ENCODE measurements at regions of chr6 and their contacts with region 1.

Region 1: DNA sequence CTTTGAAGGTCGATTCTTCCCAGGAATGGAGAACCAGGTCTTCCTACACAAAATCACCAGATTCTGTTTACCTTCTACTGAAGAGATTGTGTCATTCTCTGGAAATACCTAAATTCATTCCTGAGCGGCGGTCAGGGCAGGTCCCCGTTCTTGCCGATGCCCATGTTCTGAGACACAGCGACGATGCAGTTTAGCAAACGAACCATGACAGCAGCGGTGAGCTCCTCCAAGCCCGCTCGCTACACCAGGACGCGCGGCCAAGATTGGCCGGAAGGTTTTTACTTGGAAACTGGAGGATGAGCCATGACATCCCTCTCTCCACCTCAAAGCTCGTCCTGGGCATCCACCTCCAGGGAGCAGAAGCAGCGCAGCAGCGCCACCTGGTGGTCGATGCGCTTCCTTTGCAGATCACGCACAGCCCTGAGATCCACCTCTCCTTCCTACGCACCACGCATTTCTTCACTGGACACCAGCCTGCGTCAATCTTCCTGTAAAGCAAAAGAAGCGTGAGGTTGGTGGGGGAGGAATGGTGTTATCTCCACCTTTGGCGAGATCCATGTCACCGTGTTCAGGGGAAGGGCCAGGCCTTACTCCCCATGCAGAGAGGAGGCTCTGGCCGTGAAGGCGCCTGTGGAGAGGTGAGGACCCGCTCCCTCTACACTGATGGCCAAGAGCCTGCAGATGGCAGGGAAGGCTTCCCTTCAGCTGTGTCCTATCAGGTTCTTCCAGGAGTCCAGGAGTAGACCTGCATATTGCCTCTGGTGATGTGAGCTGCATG is 9.9 kb upstream of the HLA-B start:
- DNase-seq: peak; percentile 82 to 94
- ATAC-seq: peak; percentile 99

Region 2: DNA sequence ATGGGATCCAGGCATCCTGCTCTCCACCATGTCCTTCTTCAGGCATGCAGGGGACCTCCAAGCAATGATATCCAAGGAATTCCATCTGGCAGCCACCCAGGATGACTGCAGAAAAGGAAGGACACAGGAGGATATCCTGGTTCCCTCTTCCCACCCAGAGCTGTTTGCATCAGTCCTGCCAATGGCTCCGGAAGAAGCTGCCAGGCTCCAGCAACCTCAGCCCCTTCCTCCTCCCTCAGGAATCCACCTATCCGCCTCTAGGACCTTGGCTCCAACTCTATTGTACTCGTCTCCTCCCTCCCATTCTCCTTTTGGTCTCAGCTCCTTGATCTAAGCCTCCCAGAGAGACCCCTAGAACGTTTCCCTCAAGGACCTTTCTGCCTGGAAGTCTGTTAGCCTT is 227.3 kb before region 1 on chr6:
- intact Hi-C with region 1: loop called in 1 of 2 experiments (anchors 5 kb)
- DNase-seq: no peak
- ATAC-seq: no peak

Region 3: DNA sequence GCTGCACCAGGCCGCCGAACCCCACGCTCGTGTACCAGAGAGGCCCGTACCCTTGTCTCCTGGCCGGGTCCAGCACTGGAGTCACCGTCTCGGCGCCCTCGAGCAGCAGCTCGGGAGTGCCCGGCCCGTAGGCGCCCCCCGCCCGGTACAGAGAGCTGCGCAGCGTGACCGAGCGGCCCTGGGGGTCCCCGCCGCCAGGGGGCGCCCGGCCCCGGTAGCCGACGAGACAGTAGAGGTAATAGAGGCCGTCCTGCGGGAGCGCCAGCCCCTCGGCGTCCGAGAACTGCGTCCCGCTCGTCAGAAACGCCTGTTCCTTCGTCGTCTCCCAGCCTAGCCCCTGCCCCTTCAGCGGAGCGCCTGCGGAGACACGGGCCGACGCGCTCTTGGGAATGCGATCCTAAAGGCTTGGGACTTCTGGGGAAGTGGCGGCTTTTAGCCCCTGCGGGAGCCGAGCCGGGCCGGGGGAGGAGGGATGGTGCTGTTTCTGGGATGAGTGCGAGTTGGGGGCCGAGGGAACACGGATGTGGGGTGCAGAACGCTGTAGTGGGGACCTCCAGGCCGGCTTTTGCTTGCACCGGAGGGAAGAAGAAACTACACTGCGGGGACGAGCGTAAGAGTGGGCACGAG is 214.0 kb after region 1 on chr6:
- intact Hi-C with region 1: no loop called
- DNase-seq: peak; percentile 72 to 91
- ATAC-seq: peak; percentile 96